IMR-90 (cell line): ENCODE measurements at regions of chr15 and their contacts with region 1.

Region 1: GRCh38 chr15:89893696-89894455 is at the start of gene AP3S2:
- DNase-seq: peak; percentile 94
- ATAC-seq: peak; percentile 96
- H3K4me3 ChIP-seq: peak within 1 kb of the TSS; percentile 77
- H3K27ac ChIP-seq: peak within 1 kb of the TSS; percentile 74
- H3K4me1 ChIP-seq: no peaks in the 10 kb centered on the region
- H3K27me3 ChIP-seq: no peaks in the 10 kb centered on the region
- CTCF ChIP-seq: no peak
- POLR2A ChIP-seq: peak; percentile 75; the same call in 1 of the 2 replicates
- RAD21 ChIP-seq: peak; percentile 30; the same call in 1 of the 2 replicates
- total RNA-seq, gene AP3S2: 34.1 and 44.4 TPM in 2 replicates

Region 2: DNA sequence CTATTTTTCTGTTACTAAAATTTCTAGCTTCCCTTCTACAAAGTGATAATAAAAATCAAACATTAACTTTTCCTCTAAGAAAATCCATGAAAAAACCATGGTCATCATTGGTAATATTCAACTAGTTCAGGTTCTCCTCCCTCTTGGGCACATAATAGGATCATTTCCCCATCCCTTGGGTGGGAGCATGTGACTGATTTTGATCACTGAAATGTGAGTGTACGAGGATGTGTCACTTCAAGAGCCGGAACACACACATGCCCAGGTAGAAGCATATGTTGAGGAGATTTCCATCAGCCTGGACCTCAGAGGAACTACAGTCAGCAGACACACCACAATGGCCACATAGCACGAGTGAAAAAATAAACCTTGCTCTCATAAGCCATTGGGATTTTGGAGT is 36.2 kb before region 1 on chr15:
- CTCF ChIA-PET with region 1: no interaction called
- POLR2A ChIA-PET with region 1: no interaction called
- dilution Hi-C with region 1: no loop called
- in situ Hi-C with region 1: no loop called
- intact Hi-C with region 1: no loop called
- DNase-seq: no peak
- ATAC-seq: no peak
- H3K4me3 ChIP-seq: no peak overlapping the region
- H3K27ac ChIP-seq: no peak overlapping the region
- H3K4me1 ChIP-seq: no peaks in the 10 kb centered on the region
- H3K27me3 ChIP-seq: no peaks in the 10 kb centered on the region
- CTCF ChIP-seq: no peak
- POLR2A ChIP-seq: no peak
- RAD21 ChIP-seq: no peak

Region 3: GRCh38 chr15:90001683-90002427 is 108.0 kb after region 1 on chr15:
- CTCF ChIA-PET with region 1: no interaction called
- POLR2A ChIA-PET with region 1: no interaction called
- dilution Hi-C with region 1: no loop called
- in situ Hi-C with region 1: no loop called
- intact Hi-C with region 1: loop called (anchors 1 kb)
- DNase-seq: peak; percentile 58
- ATAC-seq: peak; percentile 33
- H3K4me3 ChIP-seq: peak overlapping the region; percentile 83
- H3K27ac ChIP-seq: peak overlapping the region; percentile 89
- H3K4me1 ChIP-seq: peaks cover 30% of the 10 kb centered on the region
- H3K27me3 ChIP-seq: no peaks in the 10 kb centered on the region
- CTCF ChIP-seq: no peak
- POLR2A ChIP-seq: 0 out of 2 replicates have a peak, but pooled peaks have one; percentile 30
- RAD21 ChIP-seq: no peak

Region 4: DNA sequence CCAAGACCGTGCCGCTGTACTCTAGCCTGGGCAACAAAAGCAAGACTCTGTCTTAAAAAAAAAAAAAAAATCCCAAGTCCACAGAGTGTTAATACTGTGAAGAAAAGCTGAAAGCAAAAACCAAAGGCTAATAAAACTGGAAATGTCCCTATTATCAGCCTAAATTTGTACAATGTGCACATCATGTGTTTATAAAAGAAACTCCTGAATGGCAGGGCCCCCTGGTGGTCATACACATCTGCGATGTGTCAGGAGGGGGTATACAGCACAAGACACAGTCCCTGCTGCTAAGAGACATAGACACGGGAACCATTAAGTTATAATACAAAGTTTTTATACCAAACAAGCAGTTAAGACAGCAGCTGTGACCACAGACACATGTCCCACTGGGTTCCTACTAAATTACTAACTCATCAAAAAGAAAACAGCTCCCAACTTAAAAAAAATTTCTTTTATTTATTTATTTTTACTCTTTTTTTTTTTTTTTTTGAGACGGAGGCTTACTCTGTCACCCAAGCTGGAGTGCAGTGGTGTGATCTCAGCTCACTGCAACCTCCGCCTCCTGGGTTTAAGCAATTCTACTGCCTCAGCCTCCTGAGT is 177.4 kb after region 1 on chr15:
- CTCF ChIA-PET with region 1: interaction called, 4 read pairs
- POLR2A ChIA-PET with region 1: no interaction called
- dilution Hi-C with region 1: no loop called
- in situ Hi-C with region 1: loop called (anchors 5 kb)
- intact Hi-C with region 1: loop called (anchors 1 kb)
- DNase-seq: peak; percentile 87
- ATAC-seq: peak; percentile 92
- H3K4me3 ChIP-seq: no peak overlapping the region
- H3K27ac ChIP-seq: no peak overlapping the region
- H3K4me1 ChIP-seq: no peaks in the 10 kb centered on the region
- H3K27me3 ChIP-seq: no peaks in the 10 kb centered on the region
- CTCF ChIP-seq: peak; percentile 87
- POLR2A ChIP-seq: no peak
- RAD21 ChIP-seq: peak; percentile 81

Region 5: DNA sequence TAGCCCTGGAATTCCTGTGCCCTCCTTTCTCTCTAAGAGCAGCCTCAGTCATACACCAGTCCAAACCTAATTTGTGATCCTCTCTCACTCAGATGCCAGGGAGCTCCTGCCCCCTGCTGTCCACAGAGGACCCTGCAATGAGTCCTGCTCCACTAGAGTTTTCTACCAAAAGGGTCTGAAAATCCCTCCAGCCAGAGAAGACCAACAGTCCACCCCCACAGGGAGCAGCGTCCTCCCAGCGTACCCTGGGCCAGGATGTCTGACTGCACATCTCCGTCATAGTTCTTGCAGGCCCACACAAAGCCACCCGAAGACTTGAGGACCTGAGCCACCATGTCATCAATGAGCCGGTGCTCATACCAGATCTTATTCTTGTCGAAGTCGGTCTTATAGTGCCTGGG is 193.0 kb after region 1 on chr15:
- CTCF ChIA-PET with region 1: no interaction called
- POLR2A ChIA-PET with region 1: no interaction called
- dilution Hi-C with region 1: no loop called
- in situ Hi-C with region 1: no loop called
- intact Hi-C with region 1: loop called (anchors 1 kb)
- DNase-seq: peak; percentile 42
- ATAC-seq: peak; percentile 75
- H3K4me3 ChIP-seq: no peak overlapping the region
- H3K27ac ChIP-seq: no peak overlapping the region
- H3K4me1 ChIP-seq: peaks cover 4% of the 10 kb centered on the region; the same call in 1 of the 2 replicates
- H3K27me3 ChIP-seq: no peaks in the 10 kb centered on the region
- CTCF ChIP-seq: peak; percentile 67
- POLR2A ChIP-seq: no peak
- RAD21 ChIP-seq: peak; percentile 79

Region 6: GRCh38 chr15:90221246-90221900 is 327.5 kb after region 1 on chr15:
- CTCF ChIA-PET with region 1: no interaction called
- POLR2A ChIA-PET with region 1: no interaction called
- dilution Hi-C with region 1: no loop called
- in situ Hi-C with region 1: loop called (anchors 10 kb)
- intact Hi-C with region 1: loop called (anchors 1 kb)
- DNase-seq: peak; percentile 86
- ATAC-seq: peak; percentile 98
- H3K4me3 ChIP-seq: no peak overlapping the region
- H3K27ac ChIP-seq: no peak overlapping the region
- H3K4me1 ChIP-seq: peaks cover 3% of the 10 kb centered on the region; the same call in 1 of the 2 replicates
- H3K27me3 ChIP-seq: no peaks in the 10 kb centered on the region
- CTCF ChIP-seq: peak; percentile 89
- POLR2A ChIP-seq: no peak
- RAD21 ChIP-seq: peak; percentile 95

Region 7: GRCh38 chr15:90233376-90234095 is 339.7 kb after region 1 on chr15 and contains the start of gene CIB1:
- CTCF ChIA-PET with region 1: no interaction called
- POLR2A ChIA-PET with region 1: no interaction called
- dilution Hi-C with region 1: no loop called
- in situ Hi-C with region 1: loop called (anchors 10 kb)
- intact Hi-C with region 1: loop called (anchors 5 kb)
- DNase-seq: peak; percentile 95
- ATAC-seq: peak; percentile 97
- H3K4me3 ChIP-seq: peak within 1 kb of the TSS; percentile 84
- H3K27ac ChIP-seq: peak within 1 kb of the TSS; percentile 77
- H3K4me1 ChIP-seq: peaks cover 4% of the 10 kb centered on the region
- H3K27me3 ChIP-seq: no peaks in the 10 kb centered on the region
- CTCF ChIP-seq: no peak; the same call in 1 of the 2 replicates
- POLR2A ChIP-seq: peak; percentile 85; the same call in 1 of the 2 replicates
- RAD21 ChIP-seq: peak; percentile 48; the same call in 1 of the 2 replicates
- total RNA-seq, gene CIB1: 29.4 and 31.5 TPM in 2 replicates